ENCODE measurements at regions of chr20 and their contacts with region 1.

Region 1: DNA sequence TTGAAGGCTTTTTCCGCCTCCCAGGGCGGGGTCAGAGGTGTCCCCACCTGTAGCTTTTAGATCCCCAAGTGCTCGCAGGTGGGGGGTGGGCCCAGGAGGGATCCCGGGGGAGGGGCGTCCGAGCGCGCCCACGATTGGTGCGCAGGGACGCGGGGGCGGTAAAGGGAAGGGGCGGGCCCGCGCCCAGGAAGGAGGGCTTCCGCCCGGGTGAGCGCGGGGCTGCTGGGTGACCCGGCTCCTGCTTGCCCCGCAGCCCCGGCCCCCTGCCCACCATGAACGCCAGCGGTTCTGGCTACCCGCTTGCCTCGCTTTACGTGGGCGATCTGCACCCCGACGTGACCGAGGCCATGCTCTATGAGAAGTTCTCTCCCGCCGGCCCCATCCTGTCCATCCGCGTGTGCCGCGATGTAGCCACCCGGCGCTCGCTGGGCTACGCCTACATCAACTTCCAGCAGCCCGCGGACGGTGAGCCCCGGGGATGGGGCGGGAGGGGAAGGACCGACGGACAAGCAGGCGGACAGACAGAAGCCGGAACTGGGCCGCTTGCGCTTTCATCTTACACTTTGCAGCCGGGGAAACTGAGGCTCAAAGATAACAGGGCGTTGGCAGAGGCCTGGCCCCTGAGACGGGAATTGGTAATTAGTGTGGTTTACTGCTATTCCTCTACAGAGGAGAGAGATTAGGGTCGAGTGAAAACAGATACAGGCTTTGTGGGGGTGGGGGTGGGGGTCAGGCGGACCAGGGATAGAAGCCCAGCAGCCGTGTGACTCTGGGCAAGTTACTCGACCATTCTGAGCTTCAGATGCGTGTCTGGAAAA is at the start of gene PABPC1L:
- DNase-seq: peak; percentile 95
- CTCF ChIP-seq: no peak

Region 2: DNA sequence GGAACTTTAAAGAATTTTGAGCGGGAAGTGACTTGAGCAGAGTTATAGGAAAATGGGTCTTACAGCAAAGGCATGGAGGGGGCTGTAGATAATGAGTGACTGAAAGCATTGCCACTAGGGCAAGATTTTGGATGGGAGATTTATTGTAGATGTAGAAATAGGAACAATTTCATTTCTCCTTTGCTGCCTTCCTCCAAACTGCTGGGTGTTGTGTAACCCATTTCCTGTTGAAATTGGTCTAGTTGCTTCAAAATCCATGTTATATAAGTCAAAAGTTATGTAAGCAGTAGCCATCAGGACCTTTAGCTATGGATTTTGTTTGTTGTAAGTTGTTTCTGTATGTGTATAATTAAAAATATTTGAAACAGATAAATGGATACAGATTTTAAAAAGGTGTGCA is 13.5 kb before region 1 on chr20:
- CTCF ChIA-PET with region 1: interaction called, 13 read pairs
- POLR2A ChIA-PET with region 1: no interaction called
- DNase-seq: no peak
- CTCF ChIP-seq: no peak

Region 3: GRCh38 chr20:45117581-45117980 is 207.5 kb after region 1 on chr20:
- CTCF ChIA-PET with region 1: no interaction called
- POLR2A ChIA-PET with region 1: no interaction called
- DNase-seq: no peak
- CTCF ChIP-seq: no peak

Region 4: GRCh38 chr20:45235995-45236394 is 325.9 kb after region 1 on chr20:
- CTCF ChIA-PET with region 1: no interaction called
- POLR2A ChIA-PET with region 1: no interaction called
- DNase-seq: no peak
- CTCF ChIP-seq: peak; percentile 24